Pancreas (tissue), 10 donors: ENCODE measurements at regions of chr13 and their contacts with region 1.

Region 1: GRCh38 chr13:37515226-37515625 is 83.3 kb downstream of the POSTN start:
- DNase-seq: no peak
- ATAC-seq: no peak
- H3K4me3 ChIP-seq: no peak overlapping the region
- H3K27ac ChIP-seq: no peak overlapping the region
- H3K4me1 ChIP-seq: no peaks in the 10 kb centered on the region
- H3K27me3 ChIP-seq: no peaks in the 10 kb centered on the region
- CTCF ChIP-seq: no peak

Region 2: DNA sequence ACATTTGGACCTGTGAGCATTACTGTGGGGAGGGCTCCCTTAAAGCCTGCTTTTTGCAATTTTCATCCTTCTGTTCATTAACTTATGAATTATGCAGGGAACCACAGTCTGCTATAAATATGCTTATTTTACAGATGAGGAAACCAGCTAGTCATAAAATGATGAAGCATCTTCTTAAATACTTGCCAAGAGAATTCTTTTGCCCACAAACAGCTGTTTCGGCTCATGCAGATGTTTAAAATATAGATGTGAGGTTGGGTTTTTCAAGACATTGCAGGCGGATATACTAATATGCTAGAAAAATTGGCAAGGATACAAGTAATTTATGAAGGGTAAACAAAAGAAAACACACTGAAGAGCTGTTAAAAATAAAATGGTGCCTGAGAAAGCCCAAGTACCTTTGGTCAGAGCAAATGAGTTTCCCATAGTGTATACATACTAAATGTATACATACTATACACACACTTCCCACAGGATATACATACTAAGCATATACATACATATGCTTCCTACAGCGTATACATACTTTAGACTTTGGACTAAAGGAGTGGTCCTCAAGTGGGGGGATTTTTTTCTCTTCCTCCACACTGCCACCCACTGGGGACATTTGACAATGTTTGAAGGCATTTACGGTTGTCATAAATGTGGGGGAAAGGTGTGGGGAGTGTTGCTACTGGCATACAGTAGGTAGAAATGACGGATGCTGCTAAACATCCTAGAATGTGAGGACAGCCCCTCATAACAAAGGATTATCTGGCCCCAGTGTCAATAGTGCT is 244.8 kb before region 1 on chr13:
- intact Hi-C with region 1: no loop called
- DNase-seq: no peak
- ATAC-seq: no peak
- H3K4me3 ChIP-seq: no peak overlapping the region
- H3K27ac ChIP-seq: no peak overlapping the region
- H3K4me1 ChIP-seq: no peaks in the 10 kb centered on the region
- H3K27me3 ChIP-seq: no peaks in the 10 kb centered on the region
- CTCF ChIP-seq: no peak

Region 3: GRCh38 chr13:37495046-37495445 is 20.2 kb before region 1 on chr13:
- intact Hi-C with region 1: loop called in 1 of 3 experiments (anchors 2 kb)
- DNase-seq: no peak
- ATAC-seq: peak in 2 of 4 donors; percentile 23 to 53
- H3K4me3 ChIP-seq: no peak overlapping the region
- H3K27ac ChIP-seq: no peak overlapping the region
- H3K4me1 ChIP-seq: no peaks in the 10 kb centered on the region
- H3K27me3 ChIP-seq: no peaks in the 10 kb centered on the region
- CTCF ChIP-seq: no peak